ENCODE measurements at regions of chr9 and their contacts with region 1.

Region 1: GRCh38 chr9:5301544-5301943 is 3.0 kb downstream of the RLN2 start:
- DNase-seq: peak in 4 of 5 donors; percentile 9 to 26 (median 24)
- H3K4me3 ChIP-seq: no peak overlapping the region
- H3K4me3 Mint-ChIP-seq: peak overlapping the region in 7 of 8 donors; percentile 39 to 78 (median 68)
- H3K27ac ChIP-seq: no peak overlapping the region
- H3K27ac Mint-ChIP-seq: peak overlapping the region; percentile 26 to 87 (median 74)
- H3K4me1 ChIP-seq: peaks cover 25% of the 10 kb centered on the region
- H3K4me1 Mint-ChIP-seq: peaks cover 16 to 32% (median 24%) of the 10 kb centered on the region in 4 donors
- H3K27me3 ChIP-seq: no peaks in the 10 kb centered on the region
- H3K27me3 Mint-ChIP-seq: no peaks in the 10 kb centered on the region

Region 2: GRCh38 chr9:5095795-5096194 is 205.7 kb before region 1 on chr9:
- CTCF ChIA-PET with region 1: no interaction called
- POLR2A ChIA-PET with region 1: no interaction called
- intact Hi-C with region 1: no loop called
- DNase-seq: no peak
- H3K4me3 ChIP-seq: no peak overlapping the region
- H3K4me3 Mint-ChIP-seq: no peak overlapping the region
- H3K27ac ChIP-seq: no peak overlapping the region
- H3K27ac Mint-ChIP-seq: no peak overlapping the region
- H3K4me1 ChIP-seq: no peaks in the 10 kb centered on the region
- H3K4me1 Mint-ChIP-seq: no peaks in the 10 kb centered on the region
- H3K27me3 ChIP-seq: no peaks in the 10 kb centered on the region
- H3K27me3 Mint-ChIP-seq: no peaks in the 10 kb centered on the region

Region 3: DNA sequence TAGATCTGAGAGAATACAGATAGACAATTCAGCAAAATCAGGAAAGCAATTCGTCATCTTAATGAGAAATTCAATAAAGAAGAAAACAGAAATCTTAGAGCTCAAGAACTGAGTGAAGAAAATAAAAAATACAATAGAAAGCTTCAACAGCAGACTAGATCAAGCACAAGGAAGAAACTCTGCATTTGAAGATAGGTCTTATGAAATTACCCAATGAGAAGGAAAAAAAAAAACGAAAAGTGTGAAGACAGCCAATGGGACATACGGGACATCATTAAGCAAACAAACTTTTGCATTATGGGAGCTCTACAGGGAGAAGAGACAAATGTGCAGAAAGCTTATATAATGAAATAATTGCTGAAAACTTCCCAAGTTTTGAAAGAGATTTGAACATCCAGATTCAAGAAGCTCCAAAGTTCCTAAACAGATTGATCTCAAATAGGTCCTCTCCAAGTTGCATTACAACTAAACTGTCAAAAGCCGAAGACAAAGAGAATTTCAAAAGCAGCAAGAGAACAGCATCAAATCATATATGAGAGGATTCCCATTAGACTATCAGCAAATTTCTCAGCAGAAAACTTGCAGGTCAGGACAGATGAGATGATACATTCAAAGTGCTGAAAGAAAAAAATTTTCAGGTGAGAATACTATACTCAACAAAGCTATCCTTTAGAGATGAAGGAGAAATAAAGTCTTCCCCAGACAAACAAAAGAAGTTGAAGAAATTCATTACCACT is 13.8 kb after region 1 on chr9:
- CTCF ChIA-PET with region 1: no interaction called
- POLR2A ChIA-PET with region 1: no interaction called
- intact Hi-C with region 1: loop called (anchors 2 kb)
- DNase-seq: no peak
- H3K4me3 ChIP-seq: no peak overlapping the region
- H3K4me3 Mint-ChIP-seq: no peak overlapping the region
- H3K27ac ChIP-seq: no peak overlapping the region
- H3K27ac Mint-ChIP-seq: no peak overlapping the region
- H3K4me1 ChIP-seq: no peaks in the 10 kb centered on the region
- H3K4me1 Mint-ChIP-seq: peaks cover 0 to 4% (median 0%) of the 10 kb centered on the region in 4 donors
- H3K27me3 ChIP-seq: no peaks in the 10 kb centered on the region
- H3K27me3 Mint-ChIP-seq: no peaks in the 10 kb centered on the region

Region 4: DNA sequence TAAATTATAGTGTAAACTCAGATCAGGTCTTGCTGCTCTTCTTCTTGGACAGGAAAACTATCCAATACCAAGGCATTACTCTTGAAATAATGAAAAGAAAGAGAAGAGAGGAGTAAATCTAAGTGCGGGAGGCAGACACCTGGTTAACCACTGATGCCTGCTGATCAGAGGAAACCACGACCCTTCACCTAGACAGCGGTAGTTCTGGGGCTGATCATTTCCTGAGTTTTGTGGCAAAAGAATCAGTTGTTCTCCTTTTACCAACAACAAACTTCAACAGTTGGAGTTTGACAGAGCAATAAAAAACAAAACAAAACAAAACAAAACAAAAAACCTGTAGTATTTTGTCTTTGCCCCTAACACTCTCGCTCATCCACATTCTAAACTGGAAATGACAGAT is 35.1 kb after region 1 on chr9:
- CTCF ChIA-PET with region 1: no interaction called
- POLR2A ChIA-PET with region 1: no interaction called
- intact Hi-C with region 1: loop called (anchors 5 kb)
- DNase-seq: peak; percentile 55 to 69 (median 65)
- H3K4me3 ChIP-seq: peak overlapping the region; percentile 2 to 17
- H3K4me3 Mint-ChIP-seq: peak overlapping the region; percentile 73 to 87 (median 78)
- H3K27ac ChIP-seq: peak overlapping the region; percentile 18
- H3K27ac Mint-ChIP-seq: peak overlapping the region; percentile 82 to 96 (median 88)
- H3K4me1 ChIP-seq: peaks cover 32% of the 10 kb centered on the region
- H3K4me1 Mint-ChIP-seq: peaks cover 28 to 54% (median 42%) of the 10 kb centered on the region in 4 donors
- H3K27me3 ChIP-seq: no peaks in the 10 kb centered on the region
- H3K27me3 Mint-ChIP-seq: no peaks in the 10 kb centered on the region

Region 5: GRCh38 chr9:5364294-5365024 is 62.9 kb after region 1 on chr9:
- CTCF ChIA-PET with region 1: no interaction called
- POLR2A ChIA-PET with region 1: no interaction called
- intact Hi-C with region 1: no loop called
- DNase-seq: no peak
- H3K4me3 ChIP-seq: no peak overlapping the region
- H3K4me3 Mint-ChIP-seq: no peak overlapping the region
- H3K27ac ChIP-seq: no peak overlapping the region
- H3K27ac Mint-ChIP-seq: no peak overlapping the region
- H3K4me1 ChIP-seq: no peaks in the 10 kb centered on the region
- H3K4me1 Mint-ChIP-seq: peaks cover 9 to 17% (median 13%) of the 10 kb centered on the region in 4 donors
- H3K27me3 ChIP-seq: no peaks in the 10 kb centered on the region
- H3K27me3 Mint-ChIP-seq: no peaks in the 10 kb centered on the region

Region 6: DNA sequence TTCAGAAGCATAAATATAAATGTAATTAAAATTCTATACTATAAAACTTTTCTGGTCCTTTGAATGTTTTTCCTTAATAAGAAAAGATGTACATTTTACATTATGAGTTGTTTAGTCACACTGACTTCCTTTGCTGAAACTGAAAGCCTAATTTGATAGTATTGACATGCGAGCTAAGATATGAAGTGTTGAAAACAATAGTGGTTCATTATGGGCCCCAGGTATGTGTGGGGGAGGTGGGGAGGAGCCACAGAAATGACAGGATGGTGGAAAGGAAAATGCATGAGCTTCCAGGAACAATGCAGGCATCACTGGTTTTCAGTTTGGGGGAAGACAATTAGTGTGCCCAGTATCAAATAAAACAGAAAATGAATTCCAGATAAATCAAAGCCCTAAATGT is 73.5 kb after region 1 on chr9:
- CTCF ChIA-PET with region 1: no interaction called
- POLR2A ChIA-PET with region 1: no interaction called
- intact Hi-C with region 1: no loop called
- DNase-seq: no peak
- H3K4me3 ChIP-seq: no peak overlapping the region
- H3K4me3 Mint-ChIP-seq: peak overlapping the region in 6 of 8 donors; percentile 2 to 68 (median 61)
- H3K27ac ChIP-seq: no peak overlapping the region
- H3K27ac Mint-ChIP-seq: peak overlapping the region in 5 of 7 donors; percentile 13 to 97 (median 61)
- H3K4me1 ChIP-seq: peaks cover 18% of the 10 kb centered on the region
- H3K4me1 Mint-ChIP-seq: peaks cover 20 to 33% (median 28%) of the 10 kb centered on the region in 4 donors
- H3K27me3 ChIP-seq: no peaks in the 10 kb centered on the region
- H3K27me3 Mint-ChIP-seq: no peaks in the 10 kb centered on the region

Measured in CD4-positive, alpha-beta memory T cell (primary cell).